ENCODE measurements at regions of chr5 and their contacts with region 1.

Region 1: GRCh38 chr5:59188419-59189225 is 605.7 kb downstream of the RAB3C start:
- DNase-seq: peak; percentile 72 to 77
- H3K4me3 ChIP-seq: no peak overlapping the region; the same call in 1 of the 2 replicates
- H3K4me3 Mint-ChIP-seq: peak overlapping the region; percentile 56
- H3K27ac Mint-ChIP-seq: no peak overlapping the region
- H3K4me1 ChIP-seq: peaks cover 6% of the 10 kb centered on the region; the same call in 1 of the 2 replicates
- H3K4me1 Mint-ChIP-seq: peaks cover 19% of the 10 kb centered on the region
- H3K27me3 ChIP-seq: no peaks in the 10 kb centered on the region
- H3K27me3 Mint-ChIP-seq: no peaks in the 10 kb centered on the region
- CTCF ChIP-seq: peak; percentile 60 to 73

Region 2: DNA sequence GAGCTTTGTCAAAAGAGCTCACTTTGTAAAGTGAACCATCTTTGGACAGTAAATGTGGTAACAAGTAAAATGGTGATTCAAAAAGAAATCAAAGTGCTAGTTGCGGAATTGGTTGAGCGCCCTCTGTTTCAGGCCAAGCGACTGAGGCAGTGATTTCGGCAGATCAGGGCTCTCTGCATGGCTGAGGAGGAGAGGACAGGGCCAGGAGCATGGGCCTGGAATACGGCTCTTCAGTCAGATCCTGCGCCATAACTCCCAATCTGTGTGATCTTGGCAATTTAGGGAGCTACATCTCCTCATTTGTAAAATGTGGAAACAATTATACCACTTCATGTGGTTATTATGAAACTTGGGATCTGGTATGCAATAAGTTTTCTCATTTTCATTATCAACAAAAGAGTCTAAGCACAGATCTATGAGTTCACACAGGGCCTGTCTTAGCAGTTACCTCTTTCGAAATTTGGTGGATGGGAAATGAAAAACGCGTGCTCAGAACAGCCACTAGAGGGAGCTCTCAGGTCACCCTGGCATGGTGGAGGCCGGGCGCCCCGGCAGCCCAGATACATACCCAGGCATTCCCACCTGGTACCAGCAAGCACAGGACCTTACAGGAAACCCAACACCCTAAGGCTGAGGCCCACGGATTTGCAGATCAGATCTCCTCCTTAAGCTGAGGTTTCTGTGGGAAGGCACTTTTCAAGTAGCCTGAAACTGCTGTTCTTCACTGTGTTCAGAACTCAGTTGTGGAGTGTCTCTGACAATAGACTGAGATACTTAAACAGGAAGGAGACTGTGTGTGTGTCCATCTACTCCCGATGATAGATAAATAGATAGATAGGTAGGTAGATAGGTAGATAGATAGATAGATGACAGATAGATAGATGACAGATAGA is 302.1 kb before region 1 on chr5:
- CTCF ChIA-PET with region 1: interaction called, 4 read pairs
- POLR2A ChIA-PET with region 1: no interaction called
- intact Hi-C with region 1: loop called (anchors 5 kb)
- DNase-seq: peak; percentile 71 to 81
- H3K4me3 ChIP-seq: no peak overlapping the region
- H3K4me3 Mint-ChIP-seq: no peak overlapping the region
- H3K27ac Mint-ChIP-seq: no peak overlapping the region
- H3K4me1 ChIP-seq: peaks cover 10% of the 10 kb centered on the region
- H3K4me1 Mint-ChIP-seq: peaks cover 17% of the 10 kb centered on the region
- H3K27me3 ChIP-seq: no peaks in the 10 kb centered on the region; the same call in 1 of the 2 replicates
- H3K27me3 Mint-ChIP-seq: peaks cover 3% of the 10 kb centered on the region
- CTCF ChIP-seq: peak; percentile 89 to 93

Region 3: DNA sequence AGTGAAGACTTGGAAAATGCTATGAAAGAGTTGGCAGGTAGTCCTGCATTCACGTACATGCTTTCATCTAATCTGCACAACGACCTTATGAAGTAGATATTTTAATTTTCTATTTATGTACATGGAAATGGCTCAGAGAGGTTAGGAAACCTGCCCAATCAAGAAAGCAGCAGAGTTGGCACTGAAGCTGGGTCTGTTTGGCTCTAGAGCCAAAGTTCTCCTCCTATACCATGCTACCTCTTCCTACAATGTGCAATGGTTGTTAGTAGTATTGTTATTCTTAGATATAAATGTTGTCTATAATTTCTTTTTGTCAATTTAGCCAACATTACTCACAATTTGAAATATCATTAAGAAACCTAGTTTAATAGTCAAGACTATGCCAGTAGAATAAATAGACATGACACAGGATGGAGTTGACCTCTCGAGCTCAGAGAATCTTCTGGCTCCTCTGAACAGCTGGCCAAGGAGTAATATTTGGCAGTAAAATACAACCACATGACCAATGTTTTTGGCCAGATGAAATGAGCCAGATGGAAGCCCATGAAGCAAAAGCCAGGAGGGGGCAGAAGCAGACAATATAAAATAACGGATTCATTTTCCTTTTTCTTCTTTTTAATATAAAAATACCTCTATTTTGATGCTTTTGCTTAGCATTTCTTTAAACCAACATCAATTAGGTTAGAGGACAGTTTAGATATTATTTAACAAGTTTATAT is 162.6 kb after region 1 on chr5:
- CTCF ChIA-PET with region 1: interaction called, 12 read pairs
- POLR2A ChIA-PET with region 1: no interaction called
- intact Hi-C with region 1: no loop called
- DNase-seq: no peak
- H3K4me3 ChIP-seq: no peak overlapping the region
- H3K4me3 Mint-ChIP-seq: no peak overlapping the region
- H3K27ac Mint-ChIP-seq: no peak overlapping the region
- H3K4me1 ChIP-seq: peaks cover 17% of the 10 kb centered on the region
- H3K4me1 Mint-ChIP-seq: peaks cover 22% of the 10 kb centered on the region
- H3K27me3 ChIP-seq: no peaks in the 10 kb centered on the region
- H3K27me3 Mint-ChIP-seq: no peaks in the 10 kb centered on the region
- CTCF ChIP-seq: no peak

Region 4: DNA sequence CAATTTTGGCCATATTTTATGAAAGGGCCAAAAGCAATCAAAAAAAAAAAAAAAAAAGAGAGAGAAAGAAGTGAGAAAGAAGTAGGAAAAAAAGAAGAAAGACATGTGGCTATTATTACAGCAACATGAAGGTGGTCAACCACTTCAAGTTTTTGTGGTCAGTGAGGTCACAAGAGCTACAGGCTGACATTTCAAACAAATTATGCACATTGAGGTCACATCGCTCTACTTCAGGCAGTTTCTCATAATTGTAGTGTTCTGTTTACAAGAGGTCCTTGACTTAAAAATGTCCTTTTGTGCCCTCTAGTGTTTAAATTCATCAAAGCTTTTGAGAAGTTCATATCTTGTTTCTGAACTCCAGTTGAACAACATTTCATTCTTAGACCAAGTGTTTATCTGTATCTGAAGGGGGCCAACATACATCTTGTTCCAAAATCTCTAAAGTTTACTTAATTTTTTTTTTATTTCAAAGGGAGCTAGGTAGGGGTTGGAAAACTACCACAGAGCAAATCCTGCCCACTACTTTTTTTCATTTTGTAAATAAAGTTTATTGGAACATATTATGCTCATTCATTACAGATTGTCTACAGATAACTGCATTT is 191.8 kb after region 1 on chr5:
- CTCF ChIA-PET with region 1: interaction called, 27 read pairs
- POLR2A ChIA-PET with region 1: no interaction called
- intact Hi-C with region 1: loop called (anchors 1 kb)
- DNase-seq: peak in 1 of 2 experiments; percentile 50
- H3K4me3 ChIP-seq: no peak overlapping the region
- H3K4me3 Mint-ChIP-seq: no peak overlapping the region
- H3K27ac Mint-ChIP-seq: no peak overlapping the region
- H3K4me1 ChIP-seq: peaks cover 7% of the 10 kb centered on the region; the same call in 1 of the 2 replicates
- H3K4me1 Mint-ChIP-seq: peaks cover under 1% of the 10 kb centered on the region
- H3K27me3 ChIP-seq: no peaks in the 10 kb centered on the region
- H3K27me3 Mint-ChIP-seq: no peaks in the 10 kb centered on the region
- CTCF ChIP-seq: peak; percentile 50 to 56

Region 5: DNA sequence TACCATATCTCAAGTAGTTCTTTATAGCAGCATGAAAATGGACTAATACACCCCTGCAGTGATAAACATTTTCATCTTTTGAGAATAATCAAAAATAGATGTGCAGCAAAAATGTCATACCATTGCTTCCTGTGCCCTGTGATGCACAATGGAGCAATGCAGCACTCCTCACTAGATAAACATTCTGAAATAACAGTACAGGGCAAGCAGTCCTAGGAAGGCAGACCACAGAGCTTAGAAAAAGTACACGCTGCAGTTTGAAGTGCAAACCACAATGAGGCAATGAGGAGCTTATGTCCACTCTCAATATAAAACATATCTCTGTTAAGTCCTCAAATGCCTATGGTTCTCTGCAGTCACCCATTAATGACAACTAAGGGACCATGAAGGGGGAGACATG is 337.3 kb after region 1 on chr5:
- CTCF ChIA-PET with region 1: no interaction called
- POLR2A ChIA-PET with region 1: no interaction called
- intact Hi-C with region 1: no loop called
- DNase-seq: no peak
- H3K4me3 ChIP-seq: no peak overlapping the region
- H3K4me3 Mint-ChIP-seq: no peak overlapping the region
- H3K27ac Mint-ChIP-seq: no peak overlapping the region
- H3K4me1 ChIP-seq: peaks cover 21% of the 10 kb centered on the region
- H3K4me1 Mint-ChIP-seq: peaks cover 11% of the 10 kb centered on the region
- H3K27me3 ChIP-seq: no peaks in the 10 kb centered on the region
- H3K27me3 Mint-ChIP-seq: no peaks in the 10 kb centered on the region
- CTCF ChIP-seq: no peak

Region 6: DNA sequence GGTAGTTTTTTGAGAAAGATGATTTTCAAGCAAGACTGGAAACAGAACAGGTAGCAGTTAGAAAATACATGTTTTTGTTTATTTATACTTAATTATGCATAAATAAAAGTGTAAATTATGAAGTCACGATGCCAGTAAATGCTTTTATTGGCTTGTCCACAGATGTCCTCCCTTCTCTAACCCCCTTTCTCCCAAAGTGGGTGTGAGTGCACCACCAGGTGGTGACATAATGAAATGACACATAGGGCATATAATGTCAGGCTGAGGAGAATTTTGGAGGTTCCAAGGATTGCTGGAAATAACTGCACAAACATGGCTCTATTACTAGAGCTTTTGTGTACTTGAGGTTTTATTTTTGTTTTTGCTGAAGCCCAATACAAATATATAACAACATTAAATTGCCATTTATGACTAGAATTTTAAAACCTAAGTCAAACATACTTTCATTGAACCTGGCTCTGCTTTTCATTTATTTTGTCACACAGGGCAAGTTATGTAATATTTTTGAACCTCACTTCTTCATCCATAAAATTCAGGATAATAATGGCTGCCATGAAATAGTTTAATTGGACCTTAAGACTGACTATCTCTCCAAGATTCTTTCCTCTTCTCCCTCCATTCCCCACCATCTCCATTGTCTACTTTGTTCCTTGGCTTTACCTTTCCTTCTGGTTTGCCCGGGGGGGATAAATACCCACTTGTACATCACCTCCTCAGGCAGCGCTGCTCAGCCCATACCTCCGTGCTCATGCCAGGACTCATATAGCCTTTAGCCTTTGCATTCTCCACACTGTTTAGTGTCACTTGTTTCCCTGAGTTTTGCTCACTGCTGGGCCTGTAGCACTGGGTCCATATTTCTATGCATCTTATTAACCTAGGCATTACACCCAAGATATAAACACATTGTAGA is 536.1 kb after region 1 on chr5:
- CTCF ChIA-PET with region 1: no interaction called
- POLR2A ChIA-PET with region 1: no interaction called
- intact Hi-C with region 1: loop called (anchors 5 kb)
- DNase-seq: peak; percentile 48 to 64
- H3K4me3 ChIP-seq: no peak overlapping the region
- H3K4me3 Mint-ChIP-seq: no peak overlapping the region
- H3K27ac Mint-ChIP-seq: no peak overlapping the region
- H3K4me1 ChIP-seq: no peaks in the 10 kb centered on the region
- H3K4me1 Mint-ChIP-seq: no peaks in the 10 kb centered on the region
- H3K27me3 ChIP-seq: no peaks in the 10 kb centered on the region
- H3K27me3 Mint-ChIP-seq: peaks cover 3% of the 10 kb centered on the region
- CTCF ChIP-seq: peak; percentile 72 to 83

Measured in Caco-2 (cell line).